H1 (cell line): ENCODE measurements at regions of chr19 and their contacts with region 1.

Region 1: GRCh38 chr19:33302175-33302973 is at the start of gene CEBPA:
- DNase-seq: peak; percentile 58 to 84
- H3K4me3 ChIP-seq: peak within 1 kb of the TSS; percentile 56 to 70 (median 61)
- H3K27ac ChIP-seq: no peak within 1 kb of the TSS; the same call in 1 of the 2 replicates
- H3K4me1 ChIP-seq: peaks cover 3 to 16% (median 12%) of the 10 kb centered on the region in 4 experiments
- H3K27me3 ChIP-seq: peaks cover 20 to 53% (median 44%) of the 10 kb centered on the region in 4 experiments
- CTCF ChIP-seq: peak; percentile 55 to 66 (median 63)
- EP300 ChIP-seq: 0 out of 3 replicates have a peak, but pooled peaks of 1 of the 2 experiments have one; percentile 16
- POLR2A ChIP-seq: peak in 1 of 2 experiments; percentile 98; a peak in 2 of 3 replicates
- RAD21 ChIP-seq: peak; percentile 0 to 46; a peak in 2 of 4 replicates
- total RNA-seq, gene CEBPA: 2.7 and 3.0 TPM in 2 replicates

Region 2: DNA sequence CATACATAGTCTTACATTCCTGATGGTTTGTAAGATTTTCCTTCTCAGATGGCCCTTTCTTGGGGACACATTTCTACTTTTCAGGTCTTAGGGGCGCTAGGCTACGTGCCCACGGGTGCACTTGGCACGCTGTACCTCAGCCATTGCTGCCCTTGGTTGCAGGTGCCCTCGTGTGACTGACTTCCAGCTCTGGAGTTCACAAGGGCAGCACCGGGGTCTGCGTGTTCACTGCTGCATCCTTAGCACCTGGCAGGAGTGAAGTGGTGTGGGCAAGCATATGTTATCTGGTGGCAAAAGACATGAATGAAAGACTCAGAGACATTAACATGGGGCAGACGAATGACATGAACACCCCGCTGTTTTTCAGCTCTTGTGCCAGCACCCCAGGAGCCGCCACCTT is 183.7 kb before region 1 on chr19:
- CTCF ChIA-PET with region 1: no interaction called
- POLR2A ChIA-PET with region 1: no interaction called
- DNase-seq: no peak
- H3K4me3 ChIP-seq: no peak overlapping the region
- H3K27ac ChIP-seq: no peak overlapping the region
- H3K4me1 ChIP-seq: no peaks in the 10 kb centered on the region
- H3K27me3 ChIP-seq: no peaks in the 10 kb centered on the region
- CTCF ChIP-seq: no peak
- EP300 ChIP-seq: no peak
- POLR2A ChIP-seq: no peak
- RAD21 ChIP-seq: no peak

Region 3: DNA sequence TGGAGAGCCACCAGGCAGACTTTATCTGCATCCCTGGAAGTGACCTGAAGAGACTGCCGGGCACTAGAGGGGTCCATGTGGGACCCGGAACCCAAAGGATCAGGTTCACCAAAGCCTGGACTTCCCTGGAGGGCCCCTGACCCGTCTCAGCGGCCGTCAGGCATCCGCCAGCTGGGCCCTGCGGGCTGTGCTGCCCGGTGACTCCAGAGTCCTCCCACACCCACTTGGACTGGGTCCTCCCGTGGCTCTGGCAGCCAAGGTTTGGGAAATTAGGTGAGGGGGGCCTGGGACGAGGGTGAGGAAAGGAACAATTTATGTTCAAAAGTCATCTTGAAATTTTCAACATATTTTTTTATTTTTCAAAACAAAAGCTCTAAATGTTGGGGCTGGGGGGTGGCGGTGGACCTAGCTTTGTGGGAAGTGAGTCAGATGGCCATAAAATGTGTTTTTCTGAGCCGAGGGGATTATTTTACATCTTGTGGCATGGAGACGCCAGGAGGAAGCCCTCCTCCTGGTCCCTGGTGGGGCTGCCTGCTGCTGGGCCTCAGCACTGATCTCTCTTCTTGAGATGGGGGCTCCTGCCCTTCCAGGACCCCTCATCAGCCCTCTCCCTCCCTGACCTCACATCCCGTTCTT is 20.2 kb before region 1 on chr19:
- CTCF ChIA-PET with region 1: interaction called, 4 read pairs
- POLR2A ChIA-PET with region 1: interaction called, 15 read pairs
- DNase-seq: no peak
- H3K4me3 ChIP-seq: no peak overlapping the region
- H3K27ac ChIP-seq: no peak overlapping the region
- H3K4me1 ChIP-seq: peaks cover 0 to 8% (median 2%) of the 10 kb centered on the region in 4 experiments; a peak in 5 of 7 replicates
- H3K27me3 ChIP-seq: no peaks in the 10 kb centered on the region
- CTCF ChIP-seq: no peak
- EP300 ChIP-seq: no peak
- POLR2A ChIP-seq: no peak
- RAD21 ChIP-seq: no peak

Region 4: DNA sequence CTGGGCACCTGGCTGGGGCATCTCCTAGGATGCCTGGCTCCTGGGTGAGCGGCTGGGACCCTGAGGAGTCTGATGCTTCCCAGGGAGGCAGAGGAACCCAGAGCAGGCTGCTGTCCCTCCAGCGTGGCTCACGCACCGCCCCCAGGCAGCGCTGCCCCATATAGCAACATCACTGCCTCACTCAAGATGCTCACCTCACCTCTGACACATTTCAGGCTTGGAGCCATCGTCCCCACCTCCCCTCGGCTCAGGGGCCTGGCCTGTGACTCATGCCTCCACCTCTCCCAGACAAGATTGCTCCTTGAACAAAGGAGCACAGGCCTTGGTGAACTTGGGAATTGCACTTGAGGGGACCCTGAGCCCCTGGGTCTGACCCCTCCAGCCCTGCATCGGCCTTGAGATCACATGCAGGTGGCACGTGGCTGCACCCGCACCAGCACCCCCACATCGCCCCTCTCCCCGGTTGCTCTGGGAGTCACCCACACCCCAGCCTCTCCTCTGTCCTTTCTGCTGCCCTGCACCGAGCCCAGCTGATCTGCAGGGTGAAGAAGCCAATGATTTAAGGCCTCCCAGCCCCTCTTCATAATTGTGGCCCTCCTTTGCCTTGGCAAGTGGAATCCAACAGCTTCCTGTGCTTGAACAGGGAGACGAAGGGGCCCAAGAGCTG is 11.3 kb before region 1 on chr19:
- CTCF ChIA-PET with region 1: interaction called, 4 read pairs
- POLR2A ChIA-PET with region 1: interaction called, 16 read pairs
- DNase-seq: no peak
- H3K4me3 ChIP-seq: no peak overlapping the region
- H3K27ac ChIP-seq: no peak overlapping the region
- H3K4me1 ChIP-seq: peaks cover 0 to 7% (median 0%) of the 10 kb centered on the region in 4 experiments; a peak in 2 of 7 replicates
- H3K27me3 ChIP-seq: no peaks in the 10 kb centered on the region; a peak in 1 of 7 replicates
- CTCF ChIP-seq: no peak
- EP300 ChIP-seq: no peak
- POLR2A ChIP-seq: no peak
- RAD21 ChIP-seq: no peak